H1 (cell line): ENCODE measurements at regions of chr14 and their contacts with region 1.

Region 1: GRCh38 chr14:35944847-35945246 is 118.7 kb downstream of the BRMS1L start:
- DNase-seq: peak; percentile 21 to 67
- H3K4me3 ChIP-seq: no peak overlapping the region
- H3K27ac ChIP-seq: no peak overlapping the region
- H3K4me1 ChIP-seq: no peaks in the 10 kb centered on the region
- H3K27me3 ChIP-seq: peaks cover 0 to 5% (median 2%) of the 10 kb centered on the region in 4 experiments; a peak in 1 of 7 replicates
- CTCF ChIP-seq: peak; percentile 67 to 78 (median 75)
- EP300 ChIP-seq: no peak
- POLR2A ChIP-seq: no peak
- RAD21 ChIP-seq: peak; percentile 47 to 61

Region 2: DNA sequence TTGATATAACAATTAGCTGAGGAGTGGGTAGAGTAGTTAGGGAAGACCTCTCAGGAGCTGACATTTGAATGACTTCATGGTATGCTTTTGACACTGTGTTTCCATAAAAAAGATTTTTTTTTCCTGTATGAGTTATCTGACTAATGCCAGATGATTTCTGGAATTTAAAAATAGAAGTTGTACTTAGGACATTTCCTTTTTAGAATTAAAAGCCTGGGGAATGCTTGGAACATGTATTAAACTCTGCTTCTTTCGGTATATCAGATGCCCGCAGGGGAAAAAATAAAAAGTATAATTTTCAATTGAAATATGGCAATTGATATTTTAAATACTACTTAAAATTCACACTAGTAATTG is 77.6 kb before region 1 on chr14:
- CTCF ChIA-PET with region 1: no interaction called
- POLR2A ChIA-PET with region 1: no interaction called
- DNase-seq: no peak
- H3K4me3 ChIP-seq: no peak overlapping the region
- H3K27ac ChIP-seq: no peak overlapping the region
- H3K4me1 ChIP-seq: no peaks in the 10 kb centered on the region
- H3K27me3 ChIP-seq: no peaks in the 10 kb centered on the region
- CTCF ChIP-seq: no peak
- EP300 ChIP-seq: no peak
- POLR2A ChIP-seq: no peak
- RAD21 ChIP-seq: no peak

Region 3: DNA sequence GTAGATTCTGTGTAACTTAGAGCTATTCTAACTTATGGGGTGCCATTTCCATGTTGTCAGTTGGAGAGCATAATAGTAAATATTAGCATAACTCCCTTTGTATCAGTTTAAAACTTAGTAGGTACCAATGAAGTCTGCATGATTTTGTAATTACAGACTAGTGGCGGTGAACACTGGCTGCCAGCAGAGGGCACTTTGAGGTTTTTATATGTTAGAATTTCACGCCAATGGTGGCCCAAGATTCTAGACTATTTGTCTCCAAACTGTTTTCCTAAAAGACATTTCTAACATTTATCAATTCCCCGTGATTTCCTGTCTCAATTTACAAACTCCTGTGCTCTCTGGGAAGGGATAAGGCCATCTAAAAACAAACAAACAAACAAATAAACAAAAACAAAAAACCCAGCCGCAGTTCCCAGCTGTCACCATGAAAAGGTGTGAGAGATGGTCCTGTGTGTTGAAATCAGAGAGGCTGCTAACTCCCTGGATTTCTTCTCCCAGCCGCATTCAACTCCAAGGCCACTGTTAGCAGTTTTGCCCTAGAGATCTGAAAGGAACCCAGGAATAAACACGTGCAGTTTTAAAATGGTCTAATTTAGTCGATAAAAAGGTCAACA is 61.1 kb before region 1 on chr14:
- CTCF ChIA-PET with region 1: interaction called, 36 read pairs
- POLR2A ChIA-PET with region 1: no interaction called
- DNase-seq: no peak
- H3K4me3 ChIP-seq: no peak overlapping the region
- H3K27ac ChIP-seq: no peak overlapping the region
- H3K4me1 ChIP-seq: no peaks in the 10 kb centered on the region
- H3K27me3 ChIP-seq: no peaks in the 10 kb centered on the region
- CTCF ChIP-seq: peak in 2 of 3 experiments; percentile 59 to 66; a peak in 3 of 4 replicates
- EP300 ChIP-seq: no peak
- POLR2A ChIP-seq: no peak
- RAD21 ChIP-seq: peak; percentile 36 to 50

Region 4: DNA sequence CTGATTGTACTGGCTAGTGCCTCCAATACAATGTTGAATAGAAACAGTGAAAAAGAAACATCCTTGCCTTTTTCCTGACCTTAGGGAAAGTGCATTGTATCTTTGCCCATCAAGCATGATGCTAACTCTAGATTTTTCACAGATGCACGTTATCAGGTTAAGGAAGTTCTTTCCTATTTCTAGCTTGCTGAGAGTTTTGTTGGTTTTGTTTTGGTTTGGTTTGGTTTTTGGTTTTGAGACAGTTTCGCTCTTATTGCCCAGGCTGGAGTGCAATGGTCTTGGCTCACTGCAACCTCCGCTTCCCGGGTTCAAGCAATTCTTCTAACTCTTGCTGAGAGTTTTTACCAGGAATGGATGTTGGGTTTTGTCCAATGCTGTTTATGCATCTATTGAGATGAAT is 29.7 kb before region 1 on chr14:
- CTCF ChIA-PET with region 1: no interaction called
- POLR2A ChIA-PET with region 1: no interaction called
- DNase-seq: no peak
- H3K4me3 ChIP-seq: no peak overlapping the region
- H3K27ac ChIP-seq: no peak overlapping the region
- H3K4me1 ChIP-seq: no peaks in the 10 kb centered on the region
- H3K27me3 ChIP-seq: no peaks in the 10 kb centered on the region
- CTCF ChIP-seq: no peak
- EP300 ChIP-seq: no peak
- POLR2A ChIP-seq: no peak
- RAD21 ChIP-seq: no peak

Region 5: DNA sequence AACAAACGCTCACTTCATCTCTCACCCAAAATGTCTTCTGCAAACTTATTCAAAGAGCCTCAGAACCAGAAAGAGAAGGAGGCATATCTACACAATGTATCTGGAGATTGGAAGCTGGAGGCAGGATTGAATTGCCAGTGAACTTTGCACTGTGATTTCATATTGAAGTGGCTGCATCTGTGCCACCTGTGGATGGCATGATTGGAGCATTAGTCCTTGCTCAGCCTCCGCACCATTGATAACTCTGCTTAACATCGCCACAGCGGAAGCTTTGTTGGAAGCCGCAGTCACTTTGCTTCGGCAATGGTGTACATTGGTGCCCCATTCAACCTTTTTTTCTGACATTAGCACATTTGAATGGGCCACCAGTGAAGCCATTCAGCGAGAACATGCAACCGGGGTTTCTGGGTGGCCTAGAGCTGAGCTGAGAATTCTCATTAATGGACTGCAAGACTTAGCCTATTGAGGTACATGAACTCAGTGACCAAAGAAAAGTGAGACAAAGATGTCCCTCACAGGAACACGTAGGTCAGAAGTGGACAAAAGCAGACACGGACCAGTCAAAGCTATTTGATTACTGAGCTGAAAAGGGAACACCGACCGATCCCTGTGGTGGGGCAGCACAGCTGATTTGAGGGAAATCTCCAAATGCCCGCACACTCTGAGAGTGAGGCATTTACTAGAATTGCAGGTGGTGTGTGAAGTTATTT is 11.7 kb after region 1 on chr14:
- CTCF ChIA-PET with region 1: interaction called, 24 read pairs
- POLR2A ChIA-PET with region 1: no interaction called
- DNase-seq: no peak
- H3K4me3 ChIP-seq: no peak overlapping the region
- H3K27ac ChIP-seq: no peak overlapping the region
- H3K4me1 ChIP-seq: peaks cover 0 to 3% (median 1%) of the 10 kb centered on the region in 4 experiments; a peak in 2 of 7 replicates
- H3K27me3 ChIP-seq: no peaks in the 10 kb centered on the region
- CTCF ChIP-seq: no peak
- EP300 ChIP-seq: no peak
- POLR2A ChIP-seq: no peak
- RAD21 ChIP-seq: no peak

Region 6: DNA sequence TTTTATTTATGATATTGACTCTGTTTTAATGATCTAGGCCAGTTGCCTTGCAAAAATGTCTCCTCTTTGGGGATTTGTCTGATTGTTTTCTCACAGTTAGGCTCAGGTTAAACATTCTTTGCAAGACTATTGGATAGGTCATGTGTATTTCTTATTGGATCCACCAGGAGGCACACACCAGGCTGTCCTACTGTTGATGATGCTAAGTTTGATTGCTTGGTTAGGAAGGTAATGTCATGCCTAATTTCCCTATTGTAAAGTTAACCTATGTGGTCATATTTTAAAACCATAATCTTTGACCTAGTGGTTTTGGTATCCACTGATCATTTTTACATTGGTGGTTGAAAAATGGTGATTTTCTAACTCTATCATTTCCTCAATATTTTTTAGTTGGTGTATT is 18.4 kb after region 1 on chr14:
- CTCF ChIA-PET with region 1: interaction called, 10 read pairs
- POLR2A ChIA-PET with region 1: no interaction called
- DNase-seq: no peak
- H3K4me3 ChIP-seq: no peak overlapping the region
- H3K27ac ChIP-seq: no peak overlapping the region
- H3K4me1 ChIP-seq: no peaks in the 10 kb centered on the region
- H3K27me3 ChIP-seq: no peaks in the 10 kb centered on the region
- CTCF ChIP-seq: peak in 2 of 3 experiments; percentile 57 to 72; a peak in 3 of 4 replicates
- EP300 ChIP-seq: no peak
- POLR2A ChIP-seq: no peak
- RAD21 ChIP-seq: peak; percentile 54 to 64

Region 7: DNA sequence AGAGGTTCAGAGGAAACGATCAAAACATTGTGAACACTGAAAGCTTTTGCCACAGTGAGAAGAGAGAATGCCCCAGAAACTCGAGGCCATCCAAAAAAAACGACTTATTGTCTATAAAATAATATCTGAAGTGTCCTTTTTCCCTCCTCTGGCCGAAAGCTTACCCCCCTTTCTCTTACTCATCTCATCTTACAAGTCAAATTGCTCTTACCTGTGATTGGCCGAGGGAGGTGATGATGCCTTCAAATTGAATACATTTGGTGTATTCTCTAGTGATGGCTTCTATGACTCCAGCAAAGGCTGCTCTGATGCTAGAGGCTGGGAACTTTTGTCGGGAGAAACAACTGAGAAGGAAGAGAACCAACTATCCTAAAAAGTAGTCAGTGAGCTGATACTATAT is 141.0 kb after region 1 on chr14:
- CTCF ChIA-PET with region 1: no interaction called
- POLR2A ChIA-PET with region 1: no interaction called
- DNase-seq: no peak
- H3K4me3 ChIP-seq: no peak overlapping the region
- H3K27ac ChIP-seq: no peak overlapping the region
- H3K4me1 ChIP-seq: no peaks in the 10 kb centered on the region
- H3K27me3 ChIP-seq: peaks cover 0 to 1% (median 0%) of the 10 kb centered on the region in 4 experiments; a peak in 1 of 7 replicates
- CTCF ChIP-seq: no peak
- EP300 ChIP-seq: no peak
- POLR2A ChIP-seq: no peak
- RAD21 ChIP-seq: no peak

Region 8: DNA sequence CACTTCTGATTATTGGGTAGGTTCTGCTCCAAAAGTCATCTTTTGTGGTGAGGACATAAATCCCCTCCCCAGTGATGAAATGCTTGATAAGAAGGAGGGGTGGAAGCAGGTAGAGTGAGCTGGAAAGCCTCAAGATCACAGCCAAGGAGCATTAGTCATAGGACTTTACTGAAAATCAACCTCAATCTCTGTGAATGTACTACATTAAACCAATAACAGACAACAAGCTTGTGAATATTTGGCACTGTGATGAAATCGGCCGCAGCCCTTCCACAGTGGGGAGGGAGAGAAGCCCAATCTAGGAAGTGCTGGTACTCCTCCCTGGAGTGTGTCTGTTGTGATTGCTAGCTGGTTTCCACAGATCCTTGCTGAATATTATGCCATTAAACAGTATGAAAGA is 272.9 kb after region 1 on chr14:
- CTCF ChIA-PET with region 1: no interaction called
- POLR2A ChIA-PET with region 1: no interaction called
- DNase-seq: no peak
- H3K4me3 ChIP-seq: no peak overlapping the region
- H3K27ac ChIP-seq: no peak overlapping the region
- H3K4me1 ChIP-seq: peaks cover 0 to 8% (median 4%) of the 10 kb centered on the region in 4 experiments; a peak in 4 of 7 replicates
- H3K27me3 ChIP-seq: no peaks in the 10 kb centered on the region
- CTCF ChIP-seq: no peak
- EP300 ChIP-seq: no peak
- POLR2A ChIP-seq: no peak
- RAD21 ChIP-seq: no peak